Activated T-helper 2 cell treated with anti-CD3 and anti-CD28 coated beads, Interferon-gamma antibody, Interleukin-2, Interleukin-4, amounts not matched to agents 10 μg/mL and 5 μg/mL and 100 μg/mL, durations not matched to agents 14 hours and 24 hours and 36 hours (primary cell): ENCODE measurements at regions of chr17 and their contacts with region 1.

Region 1: GRCh38 chr17:47229535-47230443 is 20.6 kb downstream of the MYL4 start:
- DNase-seq: peak; percentile 62
- H3K4me3 Mint-ChIP-seq: peak overlapping the region; percentile 46
- H3K27ac Mint-ChIP-seq: no peak overlapping the region
- H3K4me1 Mint-ChIP-seq: peaks cover 17% of the 10 kb centered on the region
- H3K27me3 Mint-ChIP-seq: peaks cover 23% of the 10 kb centered on the region

Region 2: DNA sequence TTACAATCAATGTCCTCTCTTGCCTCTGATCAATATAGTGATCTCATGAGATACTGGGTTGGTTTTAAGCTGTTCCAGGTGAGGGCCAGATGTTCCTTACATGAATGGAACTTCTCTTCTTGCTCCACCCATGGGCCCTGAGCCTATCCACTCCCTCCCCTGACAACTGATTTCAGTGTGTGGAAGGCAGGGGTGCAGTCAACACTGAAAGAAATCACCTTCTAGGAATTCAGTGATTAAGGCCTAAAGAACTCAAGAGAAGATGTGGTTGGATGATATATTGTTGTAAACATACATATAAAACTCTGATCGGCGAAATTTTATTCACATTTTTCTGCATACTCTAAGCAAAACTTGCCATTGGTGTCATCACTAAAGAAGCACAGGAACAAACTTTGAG is 313.6 kb before region 1 on chr17:
- intact Hi-C with region 1: no loop called
- DNase-seq: no peak
- H3K4me3 Mint-ChIP-seq: no peak overlapping the region
- H3K27ac Mint-ChIP-seq: no peak overlapping the region
- H3K4me1 Mint-ChIP-seq: no peaks in the 10 kb centered on the region
- H3K27me3 Mint-ChIP-seq: peaks cover 2% of the 10 kb centered on the region

Region 3: DNA sequence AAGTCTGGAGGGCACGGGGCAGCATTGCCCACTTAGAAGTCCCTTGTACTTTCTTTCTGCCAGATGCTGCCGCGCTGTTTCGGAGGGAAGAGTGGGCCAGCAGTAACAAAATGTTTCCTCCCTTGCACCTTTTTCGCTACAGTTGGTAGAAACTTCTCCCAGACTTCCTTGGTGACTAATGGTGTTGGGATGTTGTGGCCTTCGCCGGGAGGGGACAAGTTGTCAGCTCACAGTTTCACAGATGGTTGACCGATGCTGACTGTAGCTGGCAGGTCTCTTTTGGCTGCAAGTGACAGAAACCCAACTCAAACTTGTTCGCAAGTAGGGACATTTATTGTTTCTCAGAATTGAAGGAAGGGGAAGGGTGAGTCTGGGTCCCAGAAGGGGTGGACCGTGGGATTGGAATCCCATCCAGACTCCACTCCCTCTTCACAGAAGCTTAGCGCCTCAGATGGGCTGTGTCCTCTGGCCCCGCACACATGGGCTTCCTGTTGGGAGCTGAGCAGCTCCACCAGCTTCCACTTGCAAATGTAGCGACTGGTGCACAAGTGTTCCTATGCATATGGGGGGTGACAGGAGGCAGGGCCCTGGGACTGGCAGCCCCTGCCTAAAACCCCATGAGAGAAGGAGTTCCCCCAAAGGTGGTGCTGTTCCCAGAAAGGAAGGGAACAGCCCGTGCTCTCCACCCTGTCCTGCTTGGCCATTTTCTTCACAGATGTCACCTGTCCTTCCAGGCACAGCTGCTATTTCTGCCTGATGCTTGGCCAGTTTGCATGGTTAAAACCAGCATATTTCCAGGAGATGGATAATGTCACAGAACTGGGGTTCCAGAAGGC is 219.8 kb before region 1 on chr17:
- intact Hi-C with region 1: no loop called
- DNase-seq: no peak
- H3K4me3 Mint-ChIP-seq: no peak overlapping the region
- H3K27ac Mint-ChIP-seq: no peak overlapping the region
- H3K4me1 Mint-ChIP-seq: peaks cover 8% of the 10 kb centered on the region
- H3K27me3 Mint-ChIP-seq: no peaks in the 10 kb centered on the region

Region 4: DNA sequence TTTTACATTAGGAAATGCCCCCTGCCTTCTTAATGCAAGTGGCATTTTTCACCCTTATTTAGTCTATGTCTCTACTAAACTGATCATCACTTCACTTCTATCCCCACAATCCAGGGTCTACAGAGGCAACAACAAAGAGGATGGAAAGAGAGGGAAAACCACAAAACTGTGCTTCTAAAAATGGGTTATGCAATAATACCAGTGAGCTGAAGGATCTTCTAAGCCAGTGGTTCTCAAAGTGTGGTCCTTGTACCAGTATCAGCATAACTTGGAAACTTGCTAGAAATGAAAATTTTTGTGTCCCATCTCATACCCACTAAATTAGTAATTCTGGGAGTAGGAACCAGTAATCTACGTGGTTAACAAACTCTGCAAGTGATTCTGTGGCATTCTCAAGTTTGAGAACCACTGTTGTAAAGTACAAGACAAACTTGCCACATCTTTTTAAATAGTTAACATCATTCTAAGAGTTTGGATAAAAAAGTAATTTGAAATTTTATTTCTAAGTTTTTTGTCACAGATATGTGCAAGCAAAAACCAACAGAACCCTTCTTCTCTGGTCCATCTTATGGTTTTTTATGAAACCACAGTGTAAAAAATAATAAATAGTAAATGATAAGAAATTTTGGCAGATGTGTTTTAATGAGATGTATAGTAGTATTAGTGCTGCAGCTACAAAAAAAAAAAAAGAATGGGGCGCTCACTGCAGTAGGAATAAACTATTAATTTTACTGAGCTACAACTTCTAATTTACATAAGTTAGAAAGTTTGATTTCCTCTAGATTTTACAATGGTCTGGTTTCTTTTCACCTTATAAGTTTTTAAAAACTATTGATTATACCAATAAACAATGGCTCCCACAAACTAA is 56.9 kb before region 1 on chr17:
- intact Hi-C with region 1: no loop called
- DNase-seq: no peak
- H3K4me3 Mint-ChIP-seq: no peak overlapping the region
- H3K27ac Mint-ChIP-seq: peak overlapping the region; percentile 9
- H3K4me1 Mint-ChIP-seq: peaks cover 32% of the 10 kb centered on the region
- H3K27me3 Mint-ChIP-seq: no peaks in the 10 kb centered on the region

Region 5: DNA sequence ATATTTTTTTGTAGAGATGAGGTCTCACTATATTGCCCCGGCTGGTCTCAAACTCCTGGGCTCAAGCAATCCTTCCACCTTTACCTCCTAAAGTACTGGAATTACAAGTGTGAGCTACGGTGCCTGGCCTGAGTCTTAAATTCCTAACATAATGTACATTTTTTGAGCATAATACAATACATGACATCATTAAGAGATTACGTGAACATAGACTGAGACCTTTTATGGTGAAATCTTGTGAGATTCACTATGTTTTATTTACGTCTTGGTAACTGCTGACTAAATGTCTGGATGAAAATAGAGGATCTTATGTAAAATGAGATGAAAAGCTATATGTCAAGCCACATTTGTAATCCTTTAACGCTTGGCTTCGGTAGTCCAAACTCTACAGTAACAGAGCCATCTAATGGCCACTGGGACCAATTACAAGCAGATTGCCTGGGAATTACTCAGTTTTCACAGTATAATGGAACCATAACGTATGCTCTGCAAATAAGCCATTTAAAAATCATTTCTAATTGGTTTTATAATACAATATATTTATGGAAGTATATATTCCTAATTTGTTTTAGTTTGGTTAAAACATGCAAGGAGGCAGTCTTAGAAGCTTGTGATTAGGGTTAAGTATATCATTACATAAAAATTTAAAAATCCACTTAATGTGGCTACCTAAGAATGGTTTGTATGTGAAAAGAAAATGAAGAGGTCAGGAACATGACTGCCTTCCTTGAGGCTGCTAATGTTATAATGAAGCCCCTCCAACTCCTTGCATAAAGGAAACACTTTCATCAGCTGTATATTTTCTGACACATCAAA is 85.9 kb after region 1 on chr17:
- intact Hi-C with region 1: loop called (anchors 1 kb)
- DNase-seq: no peak
- H3K4me3 Mint-ChIP-seq: no peak overlapping the region
- H3K27ac Mint-ChIP-seq: no peak overlapping the region
- H3K4me1 Mint-ChIP-seq: no peaks in the 10 kb centered on the region
- H3K27me3 Mint-ChIP-seq: peaks cover 11% of the 10 kb centered on the region